Vagina (tissue), 2 donors: ENCODE measurements at regions of chr18 and their contacts with region 1.

Region 1: DNA sequence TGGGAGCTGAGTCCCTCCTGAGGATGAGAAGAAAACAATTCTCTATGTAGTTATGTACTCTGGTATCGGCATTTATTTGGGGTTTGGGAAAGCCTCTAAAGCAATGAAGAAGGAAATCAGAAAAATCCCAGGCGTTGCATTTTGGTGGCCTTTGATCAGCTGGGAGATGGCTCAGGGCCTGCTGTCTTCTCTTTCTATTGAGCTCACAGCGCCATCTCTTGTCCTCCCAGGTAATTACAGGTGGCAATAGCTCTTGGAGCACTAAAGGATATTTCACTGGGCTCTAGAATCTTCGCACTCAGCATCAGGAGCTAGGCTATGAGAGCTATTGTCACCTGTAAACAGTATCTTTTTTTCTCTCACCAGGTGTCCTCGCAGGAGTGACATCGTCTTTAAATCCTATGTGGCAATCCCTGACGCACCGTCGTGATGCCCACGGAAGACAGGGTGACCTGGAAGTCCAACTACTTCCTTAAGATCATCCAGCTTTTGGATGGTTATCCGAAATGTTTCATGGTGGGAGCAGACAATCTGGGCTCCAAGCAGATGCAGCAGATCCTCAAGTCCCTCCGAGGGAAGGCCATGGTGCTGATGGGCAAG is 76.1 kb upstream of the PMAIP1 start:
- DNase-seq: no peak
- H3K4me3 ChIP-seq: no peak overlapping the region
- H3K27ac ChIP-seq: no peak overlapping the region
- H3K4me1 ChIP-seq: no peaks in the 10 kb centered on the region
- H3K27me3 ChIP-seq: no peaks in the 10 kb centered on the region
- CTCF ChIP-seq: peak; percentile 48 to 78 (median 49)
- POLR2A ChIP-seq: no peak

Region 2: DNA sequence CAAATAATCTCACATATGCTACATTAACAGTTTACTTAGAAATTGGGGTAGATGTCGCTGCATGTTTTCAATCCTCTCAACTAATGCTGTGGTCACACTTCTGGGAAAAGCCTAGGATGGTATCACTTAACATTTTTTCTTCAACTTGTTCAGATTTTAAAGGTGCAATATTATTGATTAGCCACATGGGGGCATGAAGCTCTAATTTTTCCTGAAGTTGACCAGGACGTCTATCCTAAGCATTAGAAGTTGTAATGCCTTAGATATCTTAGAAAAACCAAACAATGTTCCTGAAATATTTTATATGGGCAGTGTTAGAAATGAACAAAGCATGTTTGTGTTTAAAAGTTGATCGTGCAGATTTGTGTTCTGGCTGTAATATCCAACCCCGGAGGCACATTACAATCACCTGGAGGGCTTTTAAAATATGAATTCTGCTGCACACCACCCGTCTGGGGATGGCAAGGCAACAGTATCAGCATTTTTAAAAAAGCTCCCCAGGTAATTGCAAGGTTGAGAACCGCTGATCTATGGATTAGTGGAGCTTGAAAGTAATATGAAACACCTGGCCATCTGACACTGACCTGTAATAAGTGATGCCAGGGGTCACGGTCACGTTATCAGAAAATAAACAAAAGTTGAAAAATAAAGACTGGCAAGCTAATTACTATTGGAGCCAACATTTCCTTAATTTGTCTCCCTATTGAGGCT is 364.2 kb before region 1 on chr18:
- intact Hi-C with region 1: loop called (anchors 5 kb)
- DNase-seq: no peak
- H3K4me3 ChIP-seq: no peak overlapping the region
- H3K27ac ChIP-seq: no peak overlapping the region
- H3K4me1 ChIP-seq: no peaks in the 10 kb centered on the region
- H3K27me3 ChIP-seq: no peaks in the 10 kb centered on the region
- CTCF ChIP-seq: peak in 2 of 3 experiments; percentile 44 to 63
- POLR2A ChIP-seq: no peak

Region 3: GRCh38 chr18:59718108-59718463 is 105.6 kb before region 1 on chr18:
- intact Hi-C with region 1: no loop called
- DNase-seq: no peak
- H3K4me3 ChIP-seq: no peak overlapping the region
- H3K27ac ChIP-seq: no peak overlapping the region
- H3K4me1 ChIP-seq: peaks cover 11% of the 10 kb centered on the region
- H3K27me3 ChIP-seq: no peaks in the 10 kb centered on the region
- CTCF ChIP-seq: no peak
- POLR2A ChIP-seq: no peak